ENCODE measurements at regions of chr5 and their contacts with region 1.

Region 1: DNA sequence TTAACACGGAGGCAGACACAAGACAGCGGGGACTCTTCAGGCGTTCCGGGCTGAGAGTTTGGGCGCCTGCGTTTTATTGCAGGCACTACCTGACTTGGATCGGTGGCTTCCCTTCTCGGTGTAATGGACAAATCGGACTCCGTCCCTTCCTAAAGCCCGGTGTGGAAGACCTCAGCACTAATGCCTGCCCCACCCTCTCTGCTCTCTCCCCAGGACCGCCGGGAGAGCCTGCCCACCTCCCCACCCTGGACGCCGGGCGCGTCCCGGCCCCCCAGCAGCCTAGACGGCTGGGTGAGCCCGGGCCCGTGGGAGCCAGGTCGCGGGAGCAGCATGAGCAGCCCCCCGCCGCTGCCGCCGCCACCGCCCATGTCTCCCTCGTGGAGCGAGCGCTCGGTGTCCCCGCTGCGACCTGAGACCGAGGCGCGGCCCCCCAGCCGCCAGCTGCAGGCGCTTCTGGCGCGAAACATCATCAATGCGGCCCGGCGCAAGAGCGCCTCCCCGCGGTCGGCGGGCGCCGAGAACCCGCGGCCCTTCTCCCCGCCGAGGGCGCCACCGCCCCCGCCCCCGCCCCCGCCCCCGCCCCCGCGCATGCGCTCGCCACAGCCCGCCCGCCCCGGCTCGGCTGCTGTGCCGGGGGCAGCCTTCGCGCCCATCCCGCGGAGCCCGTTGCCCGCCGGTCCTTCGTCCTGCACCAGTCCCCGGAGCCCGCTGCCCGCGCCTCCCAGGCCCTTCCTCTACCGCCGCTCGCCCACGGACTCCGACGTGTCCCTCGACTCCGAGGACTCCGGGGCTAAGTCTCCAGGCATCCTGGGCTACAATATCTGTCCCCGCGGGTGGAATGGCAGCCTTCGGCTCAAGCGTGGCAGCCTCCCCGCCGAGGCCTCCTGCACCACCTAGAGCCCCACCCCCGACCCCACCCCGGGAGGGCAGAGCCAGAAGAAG is 4.6 kb upstream of the MYOZ3 start:
- DNase-seq: peak; percentile 58
- H3K4me3 Mint-ChIP-seq: peak overlapping the region; percentile 71
- H3K27ac Mint-ChIP-seq: no peak overlapping the region
- H3K4me1 Mint-ChIP-seq: peaks cover 14% of the 10 kb centered on the region
- H3K27me3 Mint-ChIP-seq: peaks cover 11% of the 10 kb centered on the region
- CTCF ChIP-seq: peak; percentile 99

Region 2: DNA sequence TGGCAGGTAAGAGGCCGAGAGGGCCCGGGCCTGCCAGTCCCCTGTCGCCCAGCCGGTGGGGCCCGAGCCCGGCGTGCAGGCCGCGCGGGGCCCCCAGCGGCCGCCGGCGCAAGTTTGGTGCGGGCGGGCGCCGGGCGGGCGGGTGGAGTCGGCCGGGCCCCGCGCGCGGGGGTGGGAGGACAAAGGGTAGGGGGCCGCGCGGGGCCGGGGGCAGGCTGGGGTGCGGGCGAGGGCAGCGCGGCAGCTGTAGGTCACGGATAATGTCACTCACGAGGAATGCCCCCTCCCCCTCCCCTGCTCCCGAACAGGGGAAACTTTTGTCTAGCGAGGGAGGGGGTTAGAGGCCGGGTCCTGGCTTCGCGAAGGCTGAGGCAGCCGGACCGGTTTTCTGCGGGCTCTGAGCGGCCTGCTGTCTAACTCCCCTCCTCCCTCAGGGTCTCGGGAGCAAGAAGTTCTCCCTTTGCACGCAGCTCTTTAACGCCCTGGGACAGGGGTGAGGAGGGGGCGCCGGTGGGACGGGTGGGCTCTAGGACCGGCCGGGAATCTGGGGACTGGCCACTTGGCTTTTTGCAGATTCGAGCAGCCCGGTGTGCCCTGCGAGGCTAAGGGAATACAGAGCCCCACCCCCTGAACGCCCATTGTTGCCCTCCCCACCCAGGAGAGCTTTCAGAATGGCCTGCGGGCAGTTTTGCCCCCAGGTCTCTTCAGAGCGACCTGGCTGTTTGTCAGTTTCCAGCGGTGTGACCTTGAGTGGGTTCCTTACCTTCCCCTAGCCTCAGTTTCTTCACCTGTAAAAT is 169.9 kb before region 1 on chr5:
- CTCF ChIA-PET with region 1: interaction called, 11 read pairs
- POLR2A ChIA-PET with region 1: no interaction called
- intact Hi-C with region 1: no loop called
- DNase-seq: peak; percentile 51
- H3K4me3 Mint-ChIP-seq: peak overlapping the region; percentile 72
- H3K27ac Mint-ChIP-seq: peak overlapping the region; percentile 63
- H3K4me1 Mint-ChIP-seq: peaks cover 43% of the 10 kb centered on the region
- H3K27me3 Mint-ChIP-seq: no peaks in the 10 kb centered on the region
- CTCF ChIP-seq: peak; percentile 13

Region 3: GRCh38 chr5:150573867-150574817 is 82.3 kb before region 1 on chr5:
- CTCF ChIA-PET with region 1: interaction called, 429 read pairs
- POLR2A ChIA-PET with region 1: no interaction called
- intact Hi-C with region 1: no loop called
- DNase-seq: no peak
- H3K4me3 Mint-ChIP-seq: no peak overlapping the region
- H3K27ac Mint-ChIP-seq: no peak overlapping the region
- H3K4me1 Mint-ChIP-seq: no peaks in the 10 kb centered on the region
- H3K27me3 Mint-ChIP-seq: no peaks in the 10 kb centered on the region
- CTCF ChIP-seq: no peak

Region 4: DNA sequence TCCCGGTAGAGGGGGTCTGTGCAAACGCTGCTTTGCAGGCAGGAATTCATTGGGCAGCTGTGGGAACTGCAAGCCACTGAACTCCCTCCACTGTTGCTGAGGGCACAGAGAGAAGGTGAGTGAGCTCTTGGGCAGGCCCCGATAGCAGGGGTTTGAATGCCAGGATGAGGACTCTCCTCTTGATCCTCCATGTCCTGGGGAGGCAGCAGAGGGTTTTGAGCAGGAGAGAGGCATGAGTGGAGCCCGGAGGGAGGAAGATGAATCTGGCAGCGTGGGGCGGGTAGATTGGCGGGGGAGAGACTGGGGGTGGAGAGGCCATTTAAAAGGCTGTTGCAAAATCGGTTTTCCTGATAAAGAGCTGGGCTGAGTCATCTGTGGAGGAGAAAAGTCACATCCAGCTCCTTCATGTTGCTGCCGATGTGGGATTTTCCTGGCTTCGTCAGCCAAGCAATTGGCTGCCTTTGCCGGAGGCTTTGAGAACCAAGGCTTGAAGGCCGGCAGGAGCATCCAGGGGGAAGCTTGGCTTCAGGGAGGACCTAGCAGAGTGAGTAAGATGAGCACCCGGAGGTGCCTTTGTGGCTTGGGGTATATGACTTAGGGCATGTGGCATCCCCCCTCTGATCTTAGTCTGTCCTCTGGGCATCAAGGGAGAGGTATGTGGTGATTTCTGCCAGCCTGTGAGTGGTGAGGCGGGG is 16.0 kb before region 1 on chr5 and contains the start of gene SYNPO:
- CTCF ChIA-PET with region 1: interaction called, 85 read pairs
- POLR2A ChIA-PET with region 1: interaction called, 21 read pairs
- intact Hi-C with region 1: no loop called
- DNase-seq: peak; percentile 99
- H3K4me3 Mint-ChIP-seq: peak within 1 kb of the TSS; percentile 68
- H3K27ac Mint-ChIP-seq: peak within 1 kb of the TSS; percentile 86
- H3K4me1 Mint-ChIP-seq: peaks cover 94% of the 10 kb centered on the region
- H3K27me3 Mint-ChIP-seq: no peaks in the 10 kb centered on the region
- CTCF ChIP-seq: no peak
- total RNA-seq, gene SYNPO: 6.3 and 7.1 TPM in 2 replicates